ENCODE measurements at regions of chr9 and their contacts with region 1.

Region 1: DNA sequence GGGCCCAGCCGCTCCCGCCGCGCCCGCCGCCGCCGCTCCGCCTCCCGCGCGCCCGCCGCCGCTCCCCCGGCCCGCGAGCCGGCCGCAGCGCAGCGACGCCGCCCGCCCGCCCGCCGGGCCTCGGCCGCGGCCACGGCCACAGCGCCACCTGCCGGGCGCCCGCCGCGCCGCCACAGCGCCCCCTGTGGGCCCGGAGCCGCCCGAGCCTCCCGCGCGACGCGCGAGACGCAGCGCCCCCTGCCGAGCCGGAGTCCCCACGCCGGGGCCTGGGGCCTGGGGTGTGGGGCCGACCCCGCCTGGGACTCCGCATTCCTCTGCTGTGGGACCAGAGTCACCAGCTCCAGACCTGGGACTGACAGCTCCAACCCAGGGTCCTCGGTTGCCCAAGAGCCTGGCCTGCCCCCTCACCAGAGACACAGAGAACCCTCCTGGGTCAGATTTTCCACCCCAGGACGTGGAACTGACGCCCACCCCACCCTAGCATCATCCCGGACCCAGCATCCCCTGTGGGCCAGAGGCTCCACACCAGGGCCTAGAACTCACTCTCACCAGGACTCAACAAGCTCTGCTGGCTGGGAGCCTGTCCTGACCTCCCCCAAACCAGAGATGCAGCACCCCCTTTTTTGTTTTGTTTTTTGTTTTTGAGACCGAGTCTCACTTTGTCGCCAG is at the start of gene RAPGEF1:
- DNase-seq: peak; percentile 46 to 90 (median 75)
- ATAC-seq: peak; percentile 60 to 76 (median 66)
- H3K4me3 ChIP-seq: peak within 1 kb of the TSS; percentile 68 to 74
- H3K4me3 Mint-ChIP-seq: peak within 1 kb of the TSS; percentile 87 to 95 (median 90)
- H3K27ac ChIP-seq: peak within 1 kb of the TSS; percentile 54
- H3K27ac Mint-ChIP-seq: peak within 1 kb of the TSS; percentile 91 to 95
- H3K4me1 ChIP-seq: peaks cover 44 to 66% of the 10 kb centered on the region in 2 experiments
- H3K4me1 Mint-ChIP-seq: peaks cover 55 to 66% (median 65%) of the 10 kb centered on the region in 3 donors
- H3K27me3 ChIP-seq: no peaks in the 10 kb centered on the region
- H3K27me3 Mint-ChIP-seq: no peaks in the 10 kb centered on the region
- total RNA-seq, gene RAPGEF1: 97.9 to 167 (median 139) TPM

Region 2: DNA sequence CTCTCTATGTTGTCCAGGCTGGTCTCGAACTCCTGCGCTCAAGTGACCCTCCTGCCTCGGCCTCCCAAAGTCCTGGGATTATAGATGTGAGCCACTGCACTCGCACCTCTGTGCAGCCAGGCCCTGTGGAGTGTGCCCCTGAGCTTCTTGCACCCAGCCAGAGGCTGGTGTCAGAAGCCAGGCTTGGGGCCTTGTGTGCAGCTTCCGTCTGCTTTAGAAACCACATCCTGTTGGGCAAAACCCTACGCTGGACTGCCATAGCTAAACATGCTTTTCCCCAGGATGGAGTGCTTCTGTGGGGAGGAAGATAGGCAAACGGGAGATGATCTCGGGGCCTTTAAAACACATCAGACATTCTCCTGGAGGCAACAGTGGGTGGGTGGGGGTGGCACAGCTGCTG is 154.7 kb before region 1 on chr9:
- CTCF ChIA-PET with region 1: interaction called in 1 of 2 experiments, 11 read pairs
- POLR2A ChIA-PET with region 1: no interaction called
- DNase-seq: peak; percentile 28 to 80 (median 49)
- ATAC-seq: peak; percentile 82 to 96 (median 94)
- H3K4me3 ChIP-seq: no peak overlapping the region
- H3K4me3 Mint-ChIP-seq: peak overlapping the region; percentile 28 to 80 (median 44)
- H3K27ac ChIP-seq: peak overlapping the region; percentile 66
- H3K27ac Mint-ChIP-seq: peak overlapping the region; percentile 92 to 94
- H3K4me1 ChIP-seq: peaks cover 17 to 47% of the 10 kb centered on the region in 2 experiments
- H3K4me1 Mint-ChIP-seq: peaks cover 30 to 57% (median 39%) of the 10 kb centered on the region in 3 donors
- H3K27me3 ChIP-seq: no peaks in the 10 kb centered on the region
- H3K27me3 Mint-ChIP-seq: no peaks in the 10 kb centered on the region

Region 3: GRCh38 chr9:131593091-131593820 is 146.9 kb before region 1 on chr9:
- CTCF ChIA-PET with region 1: interaction called, 9 to 10 read pairs
- POLR2A ChIA-PET with region 1: no interaction called
- DNase-seq: no peak
- ATAC-seq: no peak
- H3K4me3 ChIP-seq: no peak overlapping the region
- H3K4me3 Mint-ChIP-seq: no peak overlapping the region
- H3K27ac ChIP-seq: no peak overlapping the region
- H3K27ac Mint-ChIP-seq: no peak overlapping the region
- H3K4me1 ChIP-seq: peaks cover 8 to 25% of the 10 kb centered on the region in 2 experiments
- H3K4me1 Mint-ChIP-seq: peaks cover 16 to 27% (median 24%) of the 10 kb centered on the region in 3 donors
- H3K27me3 ChIP-seq: no peaks in the 10 kb centered on the region
- H3K27me3 Mint-ChIP-seq: no peaks in the 10 kb centered on the region

Measured in T-cell (primary cell).